ENCODE measurements at regions of chr14 and their contacts with region 1.

Region 1: GRCh38 chr14:65412032-65412846 is at the start of gene FUT8:
- DNase-seq: peak; percentile 88 to 97 (median 94)
- H3K4me3 ChIP-seq: peak within 1 kb of the TSS; percentile 66 to 99 (median 91)
- H3K27ac ChIP-seq: peak within 1 kb of the TSS; percentile 88 to 100 (median 98)
- H3K27me3 ChIP-seq: no peaks in the 10 kb centered on the region
- CTCF ChIP-seq: peak; percentile 17 to 85 (median 72)
- total RNA-seq, gene FUT8: 73.3 to 174 (median 107) TPM

Region 2: DNA sequence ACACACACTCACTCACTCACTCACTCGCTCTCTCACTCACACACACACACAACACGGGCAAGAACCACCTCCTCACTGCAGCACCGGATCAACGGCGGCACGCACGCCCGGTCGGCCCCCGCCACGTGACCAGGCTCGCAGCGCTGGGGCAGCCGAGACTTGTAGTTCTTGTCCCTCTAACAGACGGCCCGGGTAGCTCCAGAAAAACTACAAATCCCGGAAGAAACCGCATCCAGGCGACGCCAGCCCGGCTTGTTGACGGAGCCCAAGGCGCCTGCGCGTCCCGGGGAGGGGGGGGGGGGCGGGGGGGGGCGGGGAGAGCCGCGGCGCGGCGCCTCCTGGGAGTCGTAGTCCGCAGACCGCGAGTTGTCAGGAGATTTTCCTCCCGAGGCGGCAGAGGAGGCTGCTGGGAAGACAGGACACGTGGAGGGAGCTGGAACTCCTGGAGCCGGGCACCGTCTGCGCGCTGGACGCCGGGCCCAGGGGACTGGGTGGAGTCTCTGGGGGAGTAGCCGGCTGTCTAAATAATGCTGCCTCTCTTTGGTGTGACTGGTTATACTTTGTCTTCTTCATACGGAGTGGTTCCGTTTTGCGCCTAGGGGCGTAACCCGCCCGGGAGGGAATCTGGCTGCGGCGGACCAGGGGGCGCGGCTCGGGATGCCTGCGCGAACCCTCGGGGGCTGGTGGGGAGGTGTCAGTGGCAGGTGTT is 309.6 kb before region 1 on chr14 and contains the start of gene MAX:
- intact Hi-C with region 1: loop called in 1 of 2 experiments (anchors 5 kb)
- DNase-seq: peak; percentile 98 to 100 (median 99)
- H3K4me3 ChIP-seq: peak within 1 kb of the TSS; percentile 74 to 100 (median 93)
- H3K27ac ChIP-seq: peak within 1 kb of the TSS in 54 of 59 donors; percentile 31 to 92 (median 77)
- H3K27me3 ChIP-seq: no peaks in the 10 kb centered on the region
- CTCF ChIP-seq: peak in 34 of 56 donors; percentile 5 to 58 (median 27)
- total RNA-seq, gene MAX: 73.6 to 138 (median 106) TPM

Region 3: GRCh38 chr14:65170768-65171507 is 241.3 kb before region 1 on chr14:
- intact Hi-C with region 1: loop called (anchors 2 kb)
- DNase-seq: peak; percentile 18 to 78 (median 60)
- H3K4me3 ChIP-seq: peak overlapping the region; percentile 30 to 75 (median 54)
- H3K27ac ChIP-seq: peak overlapping the region in 58 of 59 donors; percentile 59 to 98 (median 91)
- H3K27me3 ChIP-seq: no peaks in the 10 kb centered on the region
- CTCF ChIP-seq: peak in 46 of 56 donors; percentile 4 to 66 (median 42)

Region 4: GRCh38 chr14:65229751-65230749 is 182.2 kb before region 1 on chr14:
- intact Hi-C with region 1: loop called in 1 of 2 experiments (anchors 5 kb)
- DNase-seq: peak in 9 of 10 donors; percentile 52 to 94 (median 80)
- H3K4me3 ChIP-seq: peak overlapping the region in 57 of 59 donors; percentile 5 to 63 (median 42)
- H3K27ac ChIP-seq: peak overlapping the region; percentile 93 to 100 (median 98)
- H3K27me3 ChIP-seq: no peaks in the 10 kb centered on the region
- CTCF ChIP-seq: peak in 2 of 56 donors; percentile 12 to 20

Region 5: GRCh38 chr14:65361920-65362319 is 50.3 kb before region 1 on chr14:
- intact Hi-C with region 1: loop called (anchors 1 to 5 kb)
- DNase-seq: peak in 3 of 10 donors; percentile 42 to 69 (median 61)
- H3K4me3 ChIP-seq: peak overlapping the region in 8 of 59 donors; percentile 7 to 39 (median 12)
- H3K27ac ChIP-seq: peak overlapping the region in 58 of 59 donors; percentile 41 to 96 (median 84)
- H3K27me3 ChIP-seq: no peaks in the 10 kb centered on the region
- CTCF ChIP-seq: peak in 2 of 56 donors; percentile 13 to 15

Region 6: GRCh38 chr14:65373679-65374039 is 38.6 kb before region 1 on chr14:
- intact Hi-C with region 1: no loop called
- DNase-seq: peak in 9 of 10 donors; percentile 41 to 80 (median 65)
- H3K4me3 ChIP-seq: peak overlapping the region in 48 of 59 donors; percentile 4 to 66 (median 38)
- H3K27ac ChIP-seq: peak overlapping the region in 57 of 59 donors; percentile 58 to 97 (median 86)
- H3K27me3 ChIP-seq: peaks cover 0 to 5% (median 0%) of the 10 kb centered on the region in 45 donors
- CTCF ChIP-seq: peak in 50 of 56 donors; percentile 24 to 75 (median 48)

Region 7: GRCh38 chr14:65958664-65959562 is 546.7 kb after region 1 on chr14:
- intact Hi-C with region 1: loop called (anchors 2 to 10 kb)
- DNase-seq: peak in 1 of 10 donors; percentile 46
- H3K4me3 ChIP-seq: no peak overlapping the region
- H3K27ac ChIP-seq: no peak overlapping the region
- H3K27me3 ChIP-seq: no peaks in the 10 kb centered on the region
- CTCF ChIP-seq: peak; percentile 45 to 79 (median 66)

Measured in dorsolateral prefrontal cortex (tissue), 120 donors.